Activated CD8-positive, alpha-beta T cell treated with anti-CD3 and anti-CD28 coated beads, Interleukin-2, amount 10 ng/mL, durations not matched to agents 7 days and 5 days (primary cell): ENCODE measurements at regions of chr17 and their contacts with region 1.

Region 1: DNA sequence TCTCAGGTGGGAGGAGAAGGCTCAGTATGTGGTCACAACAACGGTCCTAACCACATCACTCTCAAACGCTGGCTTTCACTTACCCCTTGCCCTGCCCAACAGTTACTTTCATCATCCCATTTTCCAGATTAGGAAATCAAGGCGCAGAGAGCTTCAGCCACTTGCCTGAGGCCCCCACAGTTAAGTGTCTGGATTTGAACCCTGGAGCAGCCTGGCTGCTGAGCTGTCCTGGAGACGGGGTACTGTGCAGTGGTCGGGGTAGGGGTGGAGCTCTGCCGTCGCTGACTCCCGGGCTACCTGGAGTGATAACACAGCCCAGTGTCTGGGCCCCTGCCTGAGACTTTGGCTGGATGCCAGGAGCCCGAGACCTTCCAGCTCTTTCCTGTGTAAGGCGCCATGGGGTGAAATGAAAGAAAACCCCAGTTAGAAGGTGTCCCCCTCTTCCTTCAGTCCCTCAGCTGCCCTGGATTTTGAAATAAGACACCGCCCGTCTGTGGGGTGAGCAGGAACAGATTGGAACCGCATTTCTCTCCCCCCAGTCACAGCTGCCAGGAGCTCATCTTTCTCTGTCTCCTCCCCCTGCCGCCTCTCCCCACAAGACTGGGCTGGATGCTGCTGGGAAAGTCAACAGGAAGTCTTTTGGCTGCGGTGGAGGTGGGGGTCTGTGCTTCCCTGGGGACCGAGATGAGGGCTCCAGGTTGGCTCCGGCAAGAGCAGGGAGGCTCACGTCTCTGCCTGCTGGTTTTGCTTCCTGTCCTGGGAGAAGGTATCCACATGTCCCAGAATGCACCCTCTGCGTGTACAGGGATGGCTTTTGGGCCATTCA is 280.2 kb downstream of the SEC14L1 start:
- DNase-seq: peak; percentile 55
- ATAC-seq: peak; percentile 54
- H3K4me3 Mint-ChIP-seq: peak overlapping the region; percentile 57
- H3K27ac Mint-ChIP-seq: peak overlapping the region; percentile 80
- H3K4me1 Mint-ChIP-seq: peaks cover 86% of the 10 kb centered on the region
- H3K27me3 Mint-ChIP-seq: no peaks in the 10 kb centered on the region

Region 2: DNA sequence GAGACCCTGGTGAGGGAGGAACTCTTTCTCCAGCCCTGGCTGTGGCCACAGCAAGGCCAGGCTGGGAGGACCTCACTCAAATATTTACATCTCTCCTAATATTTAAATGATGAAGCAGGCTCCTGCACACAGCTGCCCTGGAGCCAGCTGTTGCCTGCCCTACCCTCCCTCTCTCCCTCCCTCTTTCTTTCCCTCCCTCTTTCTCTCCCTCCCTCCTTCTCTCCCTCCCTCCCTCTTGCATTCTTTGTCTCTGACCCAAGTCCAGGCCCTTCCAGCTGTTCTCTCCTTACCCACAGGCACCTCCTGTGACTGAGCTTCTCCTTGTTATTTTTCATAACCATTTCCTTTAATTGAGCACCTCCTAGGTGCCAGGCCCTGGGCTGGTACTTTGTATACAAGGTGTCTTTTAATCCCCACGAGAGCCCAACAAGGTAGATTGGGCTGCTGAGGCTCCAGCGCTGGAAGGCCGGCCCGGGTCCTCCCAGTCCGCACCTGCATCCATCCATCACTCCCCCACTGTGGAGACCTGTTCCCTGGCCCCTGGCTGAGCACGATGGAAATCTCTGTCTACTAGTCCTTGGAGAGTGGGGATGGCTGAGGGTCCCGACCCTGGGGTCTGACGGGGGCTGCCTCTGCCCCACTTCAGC is 37.9 kb before region 1 on chr17:
- CTCF ChIA-PET with region 1: interaction called, 15 read pairs
- POLR2A ChIA-PET with region 1: interaction called, 3 read pairs
- DNase-seq: no peak
- ATAC-seq: peak; percentile 20
- H3K4me3 Mint-ChIP-seq: peak overlapping the region; percentile 76
- H3K27ac Mint-ChIP-seq: peak overlapping the region; percentile 91
- H3K4me1 Mint-ChIP-seq: peaks cover 93% of the 10 kb centered on the region
- H3K27me3 Mint-ChIP-seq: no peaks in the 10 kb centered on the region